AG04449 (cell line): ENCODE measurements at regions of chr2 and their contacts with region 1.

Region 1: GRCh38 chr2:25664183-25664964 is 9.0 kb downstream of the DTNB start:
- DNase-seq: no peak
- H3K4me3 ChIP-seq: no peak overlapping the region
- CTCF ChIP-seq: peak; percentile 77

Region 2: DNA sequence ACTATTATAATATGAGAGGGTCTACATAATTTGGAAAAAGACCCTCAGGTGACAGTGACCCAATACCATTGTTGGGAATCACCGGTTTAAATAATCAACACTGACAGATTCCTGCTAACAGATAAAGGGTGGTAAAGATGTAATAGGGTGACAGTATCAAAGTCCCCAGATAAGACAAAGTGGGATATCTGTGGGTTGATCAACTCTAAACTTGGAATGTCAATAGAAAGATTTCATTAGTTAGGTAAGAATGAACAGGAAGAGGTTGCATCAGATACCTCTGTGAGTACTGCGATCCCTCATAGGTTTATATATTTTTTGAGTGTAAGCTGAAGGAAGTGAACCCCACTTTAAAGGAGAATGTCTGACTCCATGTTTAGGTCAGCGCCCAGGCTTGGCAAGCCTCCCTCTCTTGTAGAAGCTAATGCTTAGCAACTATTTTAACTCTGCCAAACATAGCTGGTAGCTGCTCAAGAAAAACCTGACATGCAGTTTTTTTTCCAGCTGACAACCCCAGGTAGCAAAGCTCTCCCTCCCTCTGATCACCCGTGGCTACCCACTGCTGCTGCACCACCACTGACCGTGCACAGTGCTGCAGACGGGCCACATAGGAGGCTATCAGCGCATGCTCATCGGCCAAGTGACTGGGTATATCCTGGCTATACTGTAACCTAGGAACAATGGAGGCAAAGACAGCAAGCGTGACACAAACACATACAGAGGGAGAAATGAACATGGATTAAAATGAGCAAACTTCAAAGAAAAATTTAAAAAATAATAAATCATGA is 209.4 kb before region 1 on chr2:
- CTCF ChIA-PET with region 1: no interaction called
- POLR2A ChIA-PET with region 1: no interaction called
- DNase-seq: no peak
- H3K4me3 ChIP-seq: no peak overlapping the region
- CTCF ChIP-seq: no peak

Region 3: DNA sequence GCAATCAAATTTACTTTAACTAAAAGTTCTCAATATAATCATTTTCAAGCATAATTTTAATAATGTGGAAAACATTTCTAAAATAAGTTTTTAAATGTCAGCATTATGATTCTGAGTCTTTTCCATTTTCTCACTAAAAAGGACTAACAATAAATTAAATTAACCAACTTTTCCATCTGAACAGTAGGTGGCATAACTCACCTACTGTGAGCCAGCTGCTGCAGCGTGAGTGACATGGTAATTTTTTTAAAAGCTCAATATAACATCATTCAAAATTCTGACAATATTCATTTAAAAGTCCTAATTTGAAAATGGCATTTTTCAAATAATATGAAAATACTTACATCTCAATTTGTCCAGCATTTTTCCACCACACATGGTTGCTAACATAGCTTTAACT is 57.5 kb before region 1 on chr2:
- CTCF ChIA-PET with region 1: interaction called, 262 read pairs
- POLR2A ChIA-PET with region 1: no interaction called
- DNase-seq: no peak
- H3K4me3 ChIP-seq: no peak overlapping the region
- CTCF ChIP-seq: peak; percentile 20

Region 4: GRCh38 chr2:25632396-25632795 is 32.0 kb before region 1 on chr2:
- CTCF ChIA-PET with region 1: interaction called, 11 read pairs
- POLR2A ChIA-PET with region 1: no interaction called
- DNase-seq: no peak
- H3K4me3 ChIP-seq: no peak overlapping the region
- CTCF ChIP-seq: no peak

Region 5: DNA sequence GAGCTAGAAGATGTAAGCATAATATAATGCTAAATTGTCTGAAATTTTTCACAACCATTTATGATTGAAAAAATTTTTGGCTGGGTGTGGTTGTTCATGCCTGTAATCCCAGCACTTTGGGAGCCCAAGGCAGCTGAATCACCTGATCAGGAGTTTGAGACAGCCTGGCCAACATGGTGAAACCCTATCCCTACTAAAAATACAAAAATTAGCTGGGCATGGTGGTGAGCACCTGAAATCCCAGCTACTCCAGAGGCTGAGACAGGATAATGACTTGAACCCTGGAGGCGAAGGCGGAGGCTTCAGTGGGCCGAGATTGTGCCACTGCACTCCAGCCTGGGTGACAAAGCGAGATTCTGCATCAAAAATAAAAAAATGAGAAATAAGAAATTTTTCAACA is 20.0 kb before region 1 on chr2:
- CTCF ChIA-PET with region 1: interaction called, 32 read pairs
- POLR2A ChIA-PET with region 1: no interaction called
- DNase-seq: no peak
- H3K4me3 ChIP-seq: no peak overlapping the region
- CTCF ChIP-seq: no peak

Region 6: DNA sequence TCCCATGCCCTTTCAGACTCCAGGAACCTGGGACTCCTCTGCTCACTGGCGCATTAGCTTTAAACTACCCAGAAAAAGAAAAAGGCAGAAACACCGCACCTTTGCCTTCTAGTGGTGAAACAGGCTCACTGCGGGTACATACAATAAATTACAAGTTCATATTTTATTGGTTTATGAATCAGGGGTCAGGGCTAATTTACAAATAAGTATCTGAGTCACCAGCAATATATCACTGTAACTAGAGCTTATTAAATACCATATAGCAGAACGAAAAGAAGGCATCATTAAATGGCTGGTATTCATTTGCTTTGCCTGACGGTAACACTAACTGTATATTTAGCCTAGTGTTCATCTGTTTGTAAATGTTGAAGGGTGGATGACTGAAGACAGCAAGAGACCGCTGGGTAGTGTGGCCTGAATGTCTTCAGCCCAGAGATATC is 35.9 kb after region 1 on chr2:
- CTCF ChIA-PET with region 1: interaction called, 11 read pairs
- POLR2A ChIA-PET with region 1: no interaction called
- DNase-seq: no peak
- H3K4me3 ChIP-seq: no peak overlapping the region
- CTCF ChIP-seq: peak; percentile 58

Region 7: DNA sequence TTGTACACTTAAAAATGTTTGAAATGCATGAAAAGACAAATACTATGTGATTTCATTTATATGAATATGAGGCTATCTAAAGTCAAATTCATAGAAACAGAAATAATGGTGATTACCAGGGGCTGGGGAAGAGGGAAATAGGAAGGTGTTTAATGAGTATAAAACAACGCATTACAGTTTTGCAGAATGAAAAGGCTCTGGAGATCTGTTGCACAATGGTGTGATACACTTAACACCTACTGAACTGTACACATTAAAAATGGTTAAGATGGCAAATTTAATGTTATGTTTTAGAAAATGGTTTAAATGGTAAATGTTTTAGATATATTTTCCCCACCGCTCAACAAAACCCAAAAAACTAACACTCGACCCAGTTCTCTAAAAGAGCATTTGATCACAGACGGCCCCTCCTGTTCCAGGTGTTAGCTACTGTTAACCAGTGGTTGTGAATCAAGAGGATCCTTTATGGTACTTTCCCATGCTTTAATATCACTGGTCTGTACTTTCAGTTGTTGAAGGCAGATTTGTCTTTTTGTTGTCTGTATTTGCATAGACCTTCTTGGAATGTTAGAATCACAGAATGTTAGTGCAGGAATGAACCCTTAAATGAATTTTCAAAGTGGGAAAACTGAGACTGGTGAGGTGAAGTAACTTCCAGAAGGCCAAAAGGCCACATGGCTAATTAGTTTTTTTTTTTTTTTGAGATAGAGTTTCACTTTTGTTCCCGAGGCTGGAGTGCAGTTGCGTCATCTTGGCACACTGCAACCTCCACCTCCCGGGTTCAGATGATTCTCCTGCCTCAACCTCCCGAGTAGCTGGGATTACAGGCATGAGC is 379.7 kb after region 1 on chr2:
- CTCF ChIA-PET with region 1: no interaction called
- POLR2A ChIA-PET with region 1: no interaction called
- DNase-seq: no peak
- H3K4me3 ChIP-seq: no peak overlapping the region
- CTCF ChIP-seq: no peak